CD14-positive monocyte (primary cell): ENCODE measurements at regions of chr5 and their contacts with region 1.

Region 1: GRCh38 chr5:171913987-171914273 is 92.5 kb downstream of the FBXW11 start:
- DNase-seq: no peak
- H3K4me3 ChIP-seq: no peak overlapping the region
- H3K4me3 Mint-ChIP-seq: no peak overlapping the region
- H3K27ac ChIP-seq: no peak overlapping the region
- H3K27ac Mint-ChIP-seq: peak overlapping the region in 3 of 7 donors; percentile 7 to 83 (median 43)
- H3K4me1 ChIP-seq: peaks cover 4 to 14% of the 10 kb centered on the region in 2 donors
- H3K4me1 Mint-ChIP-seq: peaks cover 27% of the 10 kb centered on the region
- H3K27me3 ChIP-seq: no peaks in the 10 kb centered on the region
- H3K27me3 Mint-ChIP-seq: no peaks in the 10 kb centered on the region
- CTCF ChIP-seq: no peak

Region 2: GRCh38 chr5:171975262-171975876 is 61.4 kb after region 1 on chr5:
- intact Hi-C with region 1: no loop called
- DNase-seq: no peak
- H3K4me3 ChIP-seq: no peak overlapping the region
- H3K4me3 Mint-ChIP-seq: no peak overlapping the region
- H3K27ac ChIP-seq: no peak overlapping the region
- H3K27ac Mint-ChIP-seq: peak overlapping the region in 3 of 7 donors; percentile 12 to 55 (median 22)
- H3K4me1 ChIP-seq: peaks cover 3 to 10% of the 10 kb centered on the region in 2 donors
- H3K4me1 Mint-ChIP-seq: peaks cover 25% of the 10 kb centered on the region
- H3K27me3 ChIP-seq: no peaks in the 10 kb centered on the region
- H3K27me3 Mint-ChIP-seq: no peaks in the 10 kb centered on the region
- CTCF ChIP-seq: no peak

Region 3: GRCh38 chr5:172044631-172045314 is 130.8 kb after region 1 on chr5:
- intact Hi-C with region 1: loop called (anchors 5 kb)
- DNase-seq: no peak
- H3K4me3 ChIP-seq: no peak overlapping the region
- H3K4me3 Mint-ChIP-seq: no peak overlapping the region
- H3K27ac ChIP-seq: peak overlapping the region in 1 of 2 donors; percentile 20
- H3K27ac Mint-ChIP-seq: peak overlapping the region in 6 of 7 donors; percentile 8 to 79 (median 60)
- H3K4me1 ChIP-seq: no peaks in the 10 kb centered on the region
- H3K4me1 Mint-ChIP-seq: peaks cover 4% of the 10 kb centered on the region
- H3K27me3 ChIP-seq: no peaks in the 10 kb centered on the region
- H3K27me3 Mint-ChIP-seq: peaks cover 0 to 2% (median 0%) of the 10 kb centered on the region in 3 donors
- CTCF ChIP-seq: no peak

Region 4: GRCh38 chr5:172293054-172293744 is 379.3 kb after region 1 on chr5:
- intact Hi-C with region 1: loop called in 1 of 2 experiments (anchors 5 kb)
- DNase-seq: peak; percentile 57 to 71 (median 70)
- H3K4me3 ChIP-seq: no peak overlapping the region
- H3K4me3 Mint-ChIP-seq: no peak overlapping the region
- H3K27ac ChIP-seq: no peak overlapping the region
- H3K27ac Mint-ChIP-seq: no peak overlapping the region
- H3K4me1 ChIP-seq: peaks cover 4% of the 10 kb centered on the region in 2 donors
- H3K4me1 Mint-ChIP-seq: peaks cover 6% of the 10 kb centered on the region
- H3K27me3 ChIP-seq: no peaks in the 10 kb centered on the region
- H3K27me3 Mint-ChIP-seq: peaks cover 1 to 8% (median 5%) of the 10 kb centered on the region in 3 donors
- CTCF ChIP-seq: peak; percentile 90